SK-N-SH (cell line): ENCODE measurements at regions of chr20 and their contacts with region 1.

Region 1: GRCh38 chr20:44866703-44867335 is 18.7 kb upstream of the YWHAB start:
- DNase-seq: no peak
- H3K4me3 ChIP-seq: no peak overlapping the region
- H3K27ac ChIP-seq: no peak overlapping the region
- H3K4me1 ChIP-seq: peaks cover 0 to 8% of the 10 kb centered on the region in 2 experiments; a peak in 1 of 4 replicates
- H3K27me3 ChIP-seq: no peaks in the 10 kb centered on the region
- CTCF ChIP-seq: no peak
- EP300 ChIP-seq: no peak
- RAD21 ChIP-seq: no peak

Region 2: GRCh38 chr20:44800398-44801046 is 66.3 kb before region 1 on chr20:
- CTCF ChIA-PET with region 1: interaction called, 13 read pairs
- POLR2A ChIA-PET with region 1: no interaction called
- DNase-seq: peak; percentile 36
- H3K4me3 ChIP-seq: no peak overlapping the region
- H3K27ac ChIP-seq: no peak overlapping the region; a peak in 1 of 4 replicates
- H3K4me1 ChIP-seq: peaks cover 0 to 47% of the 10 kb centered on the region in 2 experiments; a peak in 2 of 4 replicates
- H3K27me3 ChIP-seq: no peaks in the 10 kb centered on the region; the same call in 1 of the 2 replicates
- CTCF ChIP-seq: peak; percentile 46
- EP300 ChIP-seq: no peak
- RAD21 ChIP-seq: peak; percentile 46

Region 3: GRCh38 chr20:44837946-44838345 is 28.9 kb before region 1 on chr20:
- CTCF ChIA-PET with region 1: interaction called, 10 read pairs
- POLR2A ChIA-PET with region 1: no interaction called
- DNase-seq: no peak
- H3K4me3 ChIP-seq: no peak overlapping the region
- H3K27ac ChIP-seq: no peak overlapping the region
- H3K4me1 ChIP-seq: no peaks in the 10 kb centered on the region
- H3K27me3 ChIP-seq: peaks cover 17% of the 10 kb centered on the region
- CTCF ChIP-seq: no peak
- EP300 ChIP-seq: no peak
- RAD21 ChIP-seq: no peak

Region 4: GRCh38 chr20:44849703-44850102 is 17.1 kb before region 1 on chr20:
- CTCF ChIA-PET with region 1: interaction called, 10 read pairs
- POLR2A ChIA-PET with region 1: no interaction called
- DNase-seq: peak; percentile 30
- H3K4me3 ChIP-seq: no peak overlapping the region
- H3K27ac ChIP-seq: no peak overlapping the region
- H3K4me1 ChIP-seq: no peaks in the 10 kb centered on the region
- H3K27me3 ChIP-seq: no peaks in the 10 kb centered on the region; the same call in 1 of the 2 replicates
- CTCF ChIP-seq: no peak
- EP300 ChIP-seq: no peak
- RAD21 ChIP-seq: peak; percentile 40